ENCODE measurements at regions of chr10 and their contacts with region 1.

Region 1: DNA sequence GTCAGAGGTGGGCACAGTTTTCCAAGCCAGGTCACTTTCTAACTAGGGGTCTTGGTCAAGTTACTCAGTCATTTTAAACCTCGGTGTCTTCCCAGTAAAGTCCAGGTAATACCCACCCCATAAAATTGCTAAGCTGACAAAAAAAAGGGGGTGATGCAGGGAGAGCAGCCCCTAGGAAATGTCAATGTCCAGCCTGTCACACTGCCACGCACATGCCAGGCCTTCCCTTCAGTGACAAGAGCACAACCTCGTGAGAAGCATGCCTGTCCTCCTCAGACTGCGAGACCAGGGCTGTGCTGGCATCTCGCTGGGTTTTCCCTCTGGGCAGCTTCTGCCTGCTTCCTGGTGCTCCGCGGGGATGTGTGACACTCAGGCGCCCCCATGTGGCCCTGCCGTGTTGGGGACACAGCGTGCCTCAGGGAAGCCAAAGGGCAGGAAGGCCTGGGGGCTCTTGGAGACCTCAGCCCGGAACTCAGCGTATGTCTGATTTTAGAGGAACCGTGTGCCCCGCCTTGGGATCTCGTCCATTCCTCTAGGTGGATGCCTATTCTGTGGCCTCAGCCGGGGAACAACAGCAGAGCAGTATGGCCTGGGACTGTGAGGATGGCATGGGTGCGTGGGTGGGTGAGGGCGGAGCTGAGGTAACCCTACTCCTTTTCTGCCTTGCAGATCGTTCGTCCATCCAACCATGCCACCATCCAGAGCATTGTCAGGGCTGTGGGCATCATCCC is 10.2 kb upstream of the GDF2 start:
- DNase-seq: peak; percentile 76
- H3K4me3 ChIP-seq: no peak overlapping the region
- H3K27ac ChIP-seq: no peak overlapping the region
- H3K4me1 ChIP-seq: no peaks in the 10 kb centered on the region
- H3K27me3 ChIP-seq: no peaks in the 10 kb centered on the region
- CTCF ChIP-seq: peak; percentile 65 to 90 (median 78)
- POLR2A ChIP-seq: no peak

Region 2: DNA sequence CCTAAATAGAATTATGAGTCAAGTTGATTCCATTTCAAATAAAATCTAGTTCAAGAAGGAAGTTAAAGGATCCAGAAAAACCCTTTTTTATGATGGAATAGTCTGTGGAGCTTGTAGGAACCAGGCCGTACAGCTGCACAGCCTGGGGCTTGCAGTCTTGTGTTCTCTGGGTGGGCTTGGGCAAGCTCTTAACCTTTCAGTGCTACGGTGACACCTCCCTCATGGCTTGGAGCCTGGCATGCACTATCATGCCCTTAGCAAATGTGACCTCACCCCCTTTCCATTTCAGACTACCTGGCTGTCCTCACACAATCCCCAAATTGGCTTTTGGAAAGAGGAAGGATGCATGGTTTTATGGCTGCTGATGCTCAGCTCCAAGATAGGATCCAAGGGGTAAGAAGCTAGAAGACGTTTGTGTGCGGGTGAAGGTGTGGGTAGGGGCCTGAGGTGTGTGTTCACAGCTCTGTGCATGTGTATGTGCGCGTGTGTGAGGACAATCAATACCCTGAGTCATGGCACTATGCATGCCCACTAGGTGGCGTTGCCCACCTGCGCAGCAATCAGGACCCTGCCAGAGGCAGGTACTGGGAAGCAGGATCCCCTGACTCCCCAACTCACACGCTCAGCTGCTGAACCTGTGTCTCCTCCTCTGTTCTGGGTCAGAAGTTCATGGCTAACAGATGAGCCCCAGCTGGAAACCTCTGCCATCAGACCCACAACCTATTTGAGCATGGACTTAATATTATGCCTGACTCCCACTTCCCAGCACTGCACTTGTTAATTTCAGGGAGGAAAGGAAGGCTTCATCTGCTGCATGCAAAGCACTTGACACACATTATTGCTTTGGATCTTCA is 287.5 kb before region 1 on chr10:
- intact Hi-C with region 1: loop called (anchors 5 kb)
- DNase-seq: peak; percentile 39
- H3K4me3 ChIP-seq: no peak overlapping the region
- H3K27ac ChIP-seq: no peak overlapping the region
- H3K4me1 ChIP-seq: no peaks in the 10 kb centered on the region
- H3K27me3 ChIP-seq: no peaks in the 10 kb centered on the region
- CTCF ChIP-seq: peak; percentile 67 to 78 (median 74)
- POLR2A ChIP-seq: no peak

Region 3: DNA sequence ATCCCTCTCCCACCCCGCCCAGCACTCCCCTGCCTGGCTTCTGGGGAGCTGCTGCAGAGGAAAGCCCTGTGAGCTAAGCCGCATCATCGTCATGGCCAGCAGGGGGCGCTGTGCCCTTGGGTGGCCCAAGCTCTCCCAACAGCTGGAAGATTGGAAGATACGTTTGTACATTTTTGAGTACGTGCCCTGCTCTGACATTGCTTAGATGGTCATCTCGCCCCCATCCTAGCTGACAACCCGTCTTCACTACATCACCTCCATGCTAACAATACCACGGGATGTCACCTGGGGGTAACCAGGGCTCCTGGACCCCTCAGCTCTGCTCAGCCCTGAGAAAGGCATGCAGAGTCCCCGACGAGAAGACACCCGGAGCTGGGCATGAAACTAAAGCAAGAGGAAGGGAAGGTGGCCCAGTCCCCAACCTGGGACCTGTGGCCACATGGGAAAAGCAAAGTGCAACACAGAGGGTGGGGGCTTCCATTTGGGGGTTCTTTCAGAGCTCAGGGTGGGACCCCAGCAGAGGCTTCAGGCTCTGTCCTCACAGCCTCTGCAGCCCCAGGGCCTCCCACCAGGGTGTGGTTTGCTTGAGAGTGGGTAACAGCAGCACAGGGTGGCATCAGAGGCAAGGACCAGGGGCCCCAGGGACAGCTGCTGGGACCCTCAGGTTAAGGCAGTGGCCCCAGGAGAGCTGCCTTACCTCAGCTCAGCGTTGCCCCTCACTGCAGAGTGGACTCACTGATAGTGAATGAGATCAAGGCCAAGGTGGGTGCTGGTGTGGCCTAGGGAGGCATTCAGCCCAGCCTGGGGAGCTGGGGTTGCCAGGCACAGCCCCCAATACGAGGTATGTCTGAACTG is 264.2 kb before region 1 on chr10:
- intact Hi-C with region 1: loop called (anchors 5 kb)
- DNase-seq: peak; percentile 64
- H3K4me3 ChIP-seq: no peak overlapping the region
- H3K27ac ChIP-seq: no peak overlapping the region
- H3K4me1 ChIP-seq: no peaks in the 10 kb centered on the region
- H3K27me3 ChIP-seq: no peaks in the 10 kb centered on the region
- CTCF ChIP-seq: peak; percentile 73 to 97 (median 82)
- POLR2A ChIP-seq: no peak

Region 4: DNA sequence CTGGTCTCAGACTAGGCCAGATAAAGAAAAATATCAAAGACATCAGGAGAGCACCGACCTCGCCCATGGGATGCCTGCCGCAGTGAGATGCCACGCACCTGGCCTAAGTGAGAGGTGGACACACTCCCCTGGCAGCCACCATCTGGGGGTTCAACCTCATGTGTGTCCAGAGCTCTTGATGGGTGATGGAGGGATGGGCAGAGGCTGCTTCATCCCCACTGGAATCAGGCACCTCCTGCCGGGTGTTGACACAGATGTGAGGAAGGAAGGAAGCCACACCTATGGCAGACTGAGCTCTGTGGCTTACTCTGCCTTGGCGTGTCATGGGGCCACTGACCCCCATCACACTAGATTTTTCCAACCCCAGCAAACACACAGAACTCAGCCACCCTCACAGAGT is 60.6 kb after region 1 on chr10:
- intact Hi-C with region 1: no loop called
- DNase-seq: no peak
- H3K4me3 ChIP-seq: no peak overlapping the region
- H3K27ac ChIP-seq: no peak overlapping the region
- H3K4me1 ChIP-seq: no peaks in the 10 kb centered on the region
- H3K27me3 ChIP-seq: no peaks in the 10 kb centered on the region
- CTCF ChIP-seq: no peak
- POLR2A ChIP-seq: no peak

Region 5: GRCh38 chr10:48390933-48391845 is 1079.1 kb after region 1 on chr10:
- intact Hi-C with region 1: no loop called
- DNase-seq: no peak
- H3K4me3 ChIP-seq: no peak overlapping the region
- H3K27ac ChIP-seq: no peak overlapping the region
- H3K4me1 ChIP-seq: no peaks in the 10 kb centered on the region
- H3K27me3 ChIP-seq: no peaks in the 10 kb centered on the region
- CTCF ChIP-seq: no peak
- POLR2A ChIP-seq: no peak

Measured in prostate gland (tissue), 2 donors.